ENCODE measurements at regions of chr4 and their contacts with region 1.

Region 1: GRCh38 chr4:153466081-153466948 is at the start of gene TMEM131L:
- DNase-seq: peak in 1 of 2 donors; percentile 79
- H3K4me3 ChIP-seq: peak within 1 kb of the TSS; percentile 73 to 99
- H3K27ac ChIP-seq: peak within 1 kb of the TSS; percentile 68 to 81
- H3K4me1 ChIP-seq: peaks cover 3 to 13% of the 10 kb centered on the region in 2 donors
- H3K27me3 ChIP-seq: no peaks in the 10 kb centered on the region
- CTCF ChIP-seq: peak in 2 of 3 experiments; percentile 16 to 33
- total RNA-seq, gene TMEM131L: 6.9 TPM

Region 2: GRCh38 chr4:153344131-153345010 is 121.9 kb before region 1 on chr4 and contains the start of gene MND1:
- intact Hi-C with region 1: loop called (anchors 1 kb)
- DNase-seq: peak; percentile 22 to 88
- H3K4me3 ChIP-seq: peak within 1 kb of the TSS; percentile 67 to 87
- H3K27ac ChIP-seq: peak within 1 kb of the TSS in 1 of 2 donors; percentile 17
- H3K4me1 ChIP-seq: peaks cover 0 to 4% of the 10 kb centered on the region in 2 donors
- H3K27me3 ChIP-seq: no peaks in the 10 kb centered on the region
- CTCF ChIP-seq: peak; percentile 81 to 99 (median 97)
- total RNA-seq, gene MND1: not detected

Region 3: GRCh38 chr4:153402366-153402765 is 63.9 kb before region 1 on chr4:
- intact Hi-C with region 1: no loop called
- DNase-seq: no peak
- H3K4me3 ChIP-seq: no peak overlapping the region
- H3K27ac ChIP-seq: no peak overlapping the region
- H3K4me1 ChIP-seq: no peaks in the 10 kb centered on the region
- H3K27me3 ChIP-seq: no peaks in the 10 kb centered on the region
- CTCF ChIP-seq: no peak

Region 4: DNA sequence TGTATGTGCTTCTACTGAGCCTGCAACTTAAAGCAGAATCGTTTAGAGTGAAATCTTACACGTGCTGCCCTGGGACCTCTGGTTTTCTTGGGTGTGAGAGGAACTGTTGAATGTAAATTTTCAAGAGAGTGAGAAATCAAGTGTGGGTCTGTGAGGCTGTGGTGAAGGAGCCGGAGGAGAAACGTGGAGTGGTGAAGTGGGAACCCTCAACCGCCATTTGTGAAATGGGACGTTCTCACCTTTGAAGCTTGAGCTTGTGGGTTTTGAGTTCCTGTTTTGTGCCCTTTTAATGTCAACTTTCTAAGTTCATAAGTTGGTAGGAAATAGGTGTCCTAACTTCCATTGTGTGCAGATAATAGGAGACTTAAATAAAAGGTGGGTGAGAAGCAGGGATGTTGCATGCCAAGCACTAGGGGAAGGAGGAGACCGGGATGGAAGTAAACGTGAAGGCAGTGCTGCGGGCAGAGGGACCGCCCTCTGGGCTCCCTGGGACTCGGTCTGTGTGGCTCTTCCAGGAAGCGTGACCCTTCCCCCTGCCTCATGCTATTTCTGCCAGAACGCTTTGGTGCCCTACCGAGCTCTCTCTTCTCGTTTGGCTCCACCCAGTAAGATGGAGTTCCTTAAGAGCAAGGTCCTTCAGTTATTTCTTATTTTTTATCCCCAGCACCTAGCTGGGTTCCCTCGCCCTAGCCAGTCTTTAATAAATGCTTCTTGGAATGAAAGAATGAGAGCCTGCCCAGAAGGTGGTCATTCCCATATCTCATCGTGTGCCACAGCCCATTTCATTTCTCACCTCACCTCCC is 55.9 kb after region 1 on chr4:
- intact Hi-C with region 1: loop called (anchors 5 kb)
- DNase-seq: no peak
- H3K4me3 ChIP-seq: no peak overlapping the region
- H3K27ac ChIP-seq: peak overlapping the region; percentile 47 to 55
- H3K4me1 ChIP-seq: peaks cover 3 to 30% of the 10 kb centered on the region in 2 donors
- H3K27me3 ChIP-seq: no peaks in the 10 kb centered on the region
- CTCF ChIP-seq: no peak

Region 5: DNA sequence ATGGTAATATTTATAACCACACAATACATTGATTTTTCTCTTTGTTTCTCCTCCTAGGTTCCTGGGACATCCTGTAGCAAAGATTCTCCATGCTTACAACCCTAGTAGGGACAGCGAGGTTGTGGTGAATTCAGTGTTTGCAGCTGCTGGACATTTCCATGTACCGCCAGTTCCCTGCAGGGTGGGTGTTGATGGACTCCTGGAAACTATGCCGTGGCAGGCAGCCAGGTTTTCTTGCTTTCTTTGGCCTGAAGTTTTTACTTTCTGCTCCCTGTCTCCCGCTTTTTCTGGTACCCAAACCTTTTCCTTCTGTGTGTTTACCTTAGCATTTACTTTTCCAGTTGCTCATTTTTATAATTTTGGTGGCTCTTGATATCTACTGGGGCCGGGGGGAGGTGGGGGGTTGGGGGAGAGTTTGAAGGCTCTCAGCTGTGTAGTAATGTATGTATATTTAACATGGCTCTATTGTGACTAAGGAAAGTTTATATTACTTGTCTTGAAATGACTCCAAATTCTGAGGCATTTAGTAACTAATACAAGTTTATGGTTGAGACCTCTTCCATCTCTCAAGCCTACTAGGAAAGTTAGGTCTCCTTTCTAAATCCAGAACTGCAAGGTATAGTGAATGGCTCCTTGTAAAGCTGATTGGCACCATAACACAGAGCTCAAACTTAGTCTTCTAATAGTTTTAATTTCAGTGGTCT is 89.6 kb after region 1 on chr4:
- intact Hi-C with region 1: loop called (anchors 5 kb)
- DNase-seq: peak in 1 of 2 donors; percentile 90
- H3K4me3 ChIP-seq: peak overlapping the region in 1 of 2 donors; percentile 23
- H3K27ac ChIP-seq: peak overlapping the region; percentile 60 to 92
- H3K4me1 ChIP-seq: peaks cover 3 to 26% of the 10 kb centered on the region in 2 donors
- H3K27me3 ChIP-seq: no peaks in the 10 kb centered on the region
- CTCF ChIP-seq: no peak

Measured in ascending aorta (tissue), 2 donors.